ENCODE measurements at regions of chr10 and their contacts with region 1.

Region 1: GRCh38 chr10:117174439-117175214 is 22.7 kb upstream of the KCNK18 start:
- DNase-seq: peak; percentile 93
- ATAC-seq: peak; percentile 82
- H3K4me3 Mint-ChIP-seq: peak overlapping the region; percentile 78
- H3K27ac Mint-ChIP-seq: no peak overlapping the region
- H3K4me1 Mint-ChIP-seq: peaks cover 14% of the 10 kb centered on the region
- H3K27me3 Mint-ChIP-seq: peaks cover 95% of the 10 kb centered on the region
- CTCF ChIP-seq: peak; percentile 81

Region 2: GRCh38 chr10:116683821-116684220 is 490.8 kb before region 1 on chr10:
- CTCF ChIA-PET with region 1: interaction called, 24 read pairs
- POLR2A ChIA-PET with region 1: no interaction called
- DNase-seq: no peak
- ATAC-seq: no peak
- H3K4me3 Mint-ChIP-seq: no peak overlapping the region
- H3K27ac Mint-ChIP-seq: no peak overlapping the region
- H3K4me1 Mint-ChIP-seq: peaks cover 20% of the 10 kb centered on the region
- H3K27me3 Mint-ChIP-seq: no peaks in the 10 kb centered on the region
- CTCF ChIP-seq: no peak

Region 3: DNA sequence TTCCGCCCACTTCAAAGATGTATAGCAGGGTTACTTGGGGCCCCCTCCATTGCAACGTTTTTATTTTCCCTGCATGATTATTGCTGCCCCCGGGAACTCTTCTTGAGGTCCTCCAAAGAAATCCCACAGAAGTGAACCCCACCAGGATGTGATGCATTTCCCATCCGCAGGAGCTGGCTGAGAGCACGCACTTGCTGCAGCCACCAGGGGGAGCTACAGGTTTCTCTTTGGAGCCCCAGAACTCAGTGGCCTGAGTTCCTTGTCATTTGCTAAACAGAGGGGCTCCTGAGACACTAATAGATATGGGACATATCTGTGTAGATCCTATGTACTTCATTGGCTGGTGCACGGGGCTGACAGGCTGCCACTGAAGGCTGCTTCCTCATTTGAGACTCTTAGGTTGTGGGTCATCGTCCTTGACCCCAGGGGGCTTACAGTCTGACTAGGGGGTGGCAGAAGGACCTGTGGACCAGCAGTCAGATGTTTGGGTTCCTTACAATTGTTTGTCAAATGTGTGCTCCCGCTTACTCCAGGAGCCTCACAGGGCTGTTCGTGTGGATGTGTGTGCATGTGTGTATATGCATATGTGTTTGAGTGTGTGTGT is 377.6 kb before region 1 on chr10:
- CTCF ChIA-PET with region 1: interaction called, 99 read pairs
- POLR2A ChIA-PET with region 1: interaction called, 3 read pairs
- DNase-seq: peak; percentile 86
- ATAC-seq: peak; percentile 89
- H3K4me3 Mint-ChIP-seq: no peak overlapping the region
- H3K27ac Mint-ChIP-seq: no peak overlapping the region
- H3K4me1 Mint-ChIP-seq: peaks cover 25% of the 10 kb centered on the region
- H3K27me3 Mint-ChIP-seq: peaks cover 8% of the 10 kb centered on the region
- CTCF ChIP-seq: peak; percentile 85

Region 4: DNA sequence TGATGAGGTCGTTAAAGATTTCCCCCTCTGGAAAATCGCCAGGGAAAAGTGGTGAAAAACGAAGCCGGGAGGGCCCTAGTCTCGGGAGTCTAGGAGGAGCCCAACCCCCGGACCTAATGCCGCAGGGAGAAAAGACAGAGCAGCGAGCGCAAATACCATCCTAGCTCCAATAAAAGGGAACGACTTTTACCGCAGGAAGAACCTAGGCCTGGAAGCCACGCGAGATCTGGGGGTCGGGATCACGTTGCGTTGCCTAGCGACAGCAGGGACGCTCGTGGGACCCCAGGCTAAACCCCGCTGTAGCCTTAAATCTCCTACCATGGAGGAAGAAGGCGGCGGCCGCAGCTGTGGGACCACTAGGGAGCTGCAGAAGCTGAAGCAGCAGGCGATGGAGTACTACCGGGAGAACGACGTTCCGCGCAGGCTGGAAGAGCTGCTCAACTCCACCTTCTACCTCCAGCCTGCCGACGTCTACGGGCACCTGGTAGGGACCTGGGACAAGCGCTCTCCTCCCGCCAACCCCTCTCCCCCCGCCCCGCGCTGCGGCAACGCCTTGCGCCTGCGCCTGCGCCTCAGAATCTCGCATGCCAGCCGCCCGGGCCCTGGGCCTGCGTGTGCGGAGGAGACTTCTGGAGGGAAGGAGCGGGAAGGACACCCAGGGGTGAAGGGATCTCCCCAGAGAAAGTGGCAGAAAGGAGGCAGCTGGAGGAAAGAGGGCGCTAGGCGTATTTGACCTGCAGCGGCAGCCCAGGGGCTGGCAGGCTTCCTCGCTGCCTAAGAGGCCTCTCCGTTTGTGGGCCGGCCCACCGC is 325.2 kb before region 1 on chr10 and contains the start of gene ENO4:
- CTCF ChIA-PET with region 1: interaction called, 10 read pairs
- POLR2A ChIA-PET with region 1: no interaction called
- DNase-seq: peak; percentile 90
- ATAC-seq: peak; percentile 85
- H3K4me3 Mint-ChIP-seq: peak within 1 kb of the TSS; percentile 89
- H3K27ac Mint-ChIP-seq: peak within 1 kb of the TSS; percentile 75
- H3K4me1 Mint-ChIP-seq: peaks cover 34% of the 10 kb centered on the region
- H3K27me3 Mint-ChIP-seq: peaks cover 20% of the 10 kb centered on the region
- CTCF ChIP-seq: no peak
- total RNA-seq, gene ENO4: 0.27 to 1.1 TPM (median 0.42 TPM) in 3 replicates

Region 5: DNA sequence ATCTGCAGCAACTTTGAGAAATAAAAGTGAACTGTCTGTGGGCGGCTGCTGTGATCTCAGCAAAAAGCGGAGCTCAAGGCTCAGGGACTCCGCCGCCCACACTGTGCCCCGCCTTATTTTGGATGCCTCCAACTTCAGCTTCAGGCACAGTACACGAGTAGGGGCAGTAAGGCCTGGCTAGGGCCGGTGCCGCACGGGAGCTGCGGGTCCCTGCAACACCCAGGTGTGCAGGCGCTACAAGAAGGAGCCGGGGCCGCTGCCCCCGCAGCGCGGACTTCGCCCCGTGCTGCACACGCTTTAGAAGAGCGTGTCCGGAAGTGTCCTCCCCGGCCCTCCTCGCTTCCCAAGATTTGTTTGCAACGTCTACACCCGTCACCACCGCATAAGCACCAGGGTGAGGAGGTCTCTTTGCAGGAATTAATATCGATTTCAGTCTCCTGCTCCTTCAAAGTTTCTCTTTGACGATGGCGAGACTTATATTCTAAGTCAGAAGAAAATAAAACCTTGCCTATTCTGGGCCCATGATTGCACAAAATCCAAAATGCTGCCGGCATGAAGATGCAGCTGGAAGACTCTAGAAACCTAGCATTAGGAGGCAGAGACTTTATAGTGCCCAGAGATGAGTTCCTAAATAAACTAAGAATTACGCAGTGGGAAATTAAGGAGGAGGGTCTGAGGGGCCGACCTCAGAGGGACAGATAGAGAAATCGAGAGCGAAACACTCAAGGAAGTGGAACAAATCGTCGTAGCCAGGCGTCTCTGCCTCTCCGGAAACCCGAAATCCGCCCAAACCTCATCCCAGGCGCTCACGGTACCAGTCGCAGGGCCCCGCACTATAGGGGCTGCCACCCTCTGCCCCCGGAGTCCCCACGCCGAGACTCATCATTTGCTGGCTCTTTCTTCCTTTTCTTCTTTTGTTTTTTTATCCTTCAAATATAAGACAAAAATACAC is 43.0 kb before region 1 on chr10:
- CTCF ChIA-PET with region 1: interaction called, 72 read pairs
- POLR2A ChIA-PET with region 1: no interaction called
- DNase-seq: peak; percentile 47
- ATAC-seq: peak; percentile 23
- H3K4me3 Mint-ChIP-seq: peak overlapping the region; percentile 54
- H3K27ac Mint-ChIP-seq: no peak overlapping the region
- H3K4me1 Mint-ChIP-seq: peaks cover 56% of the 10 kb centered on the region
- H3K27me3 Mint-ChIP-seq: peaks cover 98% of the 10 kb centered on the region
- CTCF ChIP-seq: no peak

Region 6: DNA sequence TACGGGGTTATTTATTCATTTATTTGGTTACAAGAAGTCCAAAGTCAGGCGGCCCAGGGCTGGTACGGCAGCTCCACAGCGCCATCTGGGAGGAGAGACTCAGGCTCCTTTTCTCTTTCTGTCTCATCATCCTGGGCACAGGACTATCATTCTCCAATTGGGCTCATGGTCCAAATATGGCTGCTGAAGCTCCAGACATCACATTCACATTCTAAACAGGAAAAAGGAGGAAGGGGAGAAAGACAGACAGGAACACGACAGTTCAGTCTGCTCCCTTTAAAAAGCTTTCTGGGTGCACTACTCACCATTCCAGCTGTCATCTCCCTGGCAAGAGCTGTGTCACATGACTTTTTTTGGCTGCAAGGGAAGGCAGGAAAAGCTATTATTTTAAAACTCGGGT is 275.0 kb after region 1 on chr10:
- CTCF ChIA-PET with region 1: no interaction called
- POLR2A ChIA-PET with region 1: no interaction called
- DNase-seq: peak; percentile 38
- ATAC-seq: peak; percentile 48; the same call in 1 of the 2 replicates
- H3K4me3 Mint-ChIP-seq: no peak overlapping the region
- H3K27ac Mint-ChIP-seq: no peak overlapping the region
- H3K4me1 Mint-ChIP-seq: peaks cover 10% of the 10 kb centered on the region
- H3K27me3 Mint-ChIP-seq: peaks cover 19% of the 10 kb centered on the region
- CTCF ChIP-seq: no peak

Measured in WTC11 (cell line).